GM13976 (cell line): ENCODE measurements at regions of chr7 and their contacts with region 1.

Region 1: GRCh38 chr7:101197991-101198390 is 2.8 kb downstream of the MOGAT3 start:
- DNase-seq: no peak
- CTCF ChIP-seq: no peak

Region 2: DNA sequence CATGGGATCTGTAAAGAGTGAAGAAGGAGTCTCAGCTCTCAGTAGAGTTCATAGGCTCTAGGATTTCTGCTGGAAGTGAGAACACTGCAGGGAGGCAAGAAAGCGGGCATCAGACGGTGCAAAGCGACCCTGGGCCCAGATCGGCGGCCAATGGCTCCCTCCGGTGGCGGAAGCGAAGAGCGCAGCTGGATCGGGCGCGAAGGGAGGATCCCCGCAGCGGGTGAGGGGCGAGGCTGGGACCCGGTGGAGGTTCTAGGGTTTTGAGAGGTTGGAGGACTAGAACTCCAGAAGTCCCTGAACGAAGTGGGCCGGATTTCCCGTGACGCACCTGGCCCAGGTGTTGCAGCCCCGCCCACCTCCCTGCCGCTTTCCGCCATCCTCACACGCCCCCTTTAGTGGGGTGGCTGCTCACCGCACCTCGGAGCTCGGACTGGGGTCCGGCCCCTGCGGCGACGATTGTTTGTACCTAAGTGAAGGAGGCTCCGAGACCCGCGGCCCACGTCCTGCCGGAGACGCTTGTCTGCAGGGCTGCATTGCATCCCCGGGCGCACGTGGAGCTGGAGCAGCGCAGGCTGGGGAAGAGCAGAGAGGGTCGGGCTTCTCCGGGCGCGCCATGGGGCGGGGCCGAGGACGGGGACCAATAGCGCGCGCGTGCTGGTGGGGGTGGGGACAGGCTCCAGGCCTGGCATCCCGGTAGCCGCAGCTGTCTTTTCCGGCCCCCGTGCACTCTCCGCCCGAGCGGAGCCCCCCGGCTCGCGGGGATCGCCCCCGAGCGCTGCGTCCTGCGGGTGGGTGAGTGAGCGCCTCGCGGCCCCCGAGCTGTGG is 345.7 kb before region 1 on chr7 and contains the start of gene SLC12A9:
- in situ Hi-C with region 1: no loop called
- DNase-seq: peak; percentile 98
- CTCF ChIP-seq: peak; percentile 91

Region 3: GRCh38 chr7:101140339-101140699 is 57.7 kb before region 1 on chr7:
- in situ Hi-C with region 1: loop called (anchors 10 kb)
- DNase-seq: no peak
- CTCF ChIP-seq: no peak

Region 4: DNA sequence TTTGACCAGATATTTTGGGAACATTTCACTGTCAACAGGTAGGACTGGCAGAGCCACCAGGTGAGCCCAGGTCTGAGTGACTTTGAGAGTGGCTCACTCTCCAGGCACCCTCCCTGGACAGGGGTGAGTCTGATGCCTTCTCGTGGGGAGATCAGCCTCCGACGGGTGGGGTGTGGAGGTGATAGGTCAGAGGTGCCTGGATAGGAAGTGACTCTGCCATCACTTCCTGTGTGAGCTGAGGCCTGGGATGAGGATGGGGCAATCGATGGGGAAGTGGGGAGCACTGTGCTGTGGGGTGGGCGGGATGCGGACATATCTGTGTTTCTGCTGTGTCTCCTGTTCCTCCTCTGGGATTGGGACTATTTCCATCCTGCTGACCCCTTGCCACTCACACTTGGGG is 89.0 kb after region 1 on chr7:
- in situ Hi-C with region 1: no loop called
- DNase-seq: no peak
- CTCF ChIP-seq: no peak